ENCODE measurements at regions of chr7 and their contacts with region 1.

Region 1: DNA sequence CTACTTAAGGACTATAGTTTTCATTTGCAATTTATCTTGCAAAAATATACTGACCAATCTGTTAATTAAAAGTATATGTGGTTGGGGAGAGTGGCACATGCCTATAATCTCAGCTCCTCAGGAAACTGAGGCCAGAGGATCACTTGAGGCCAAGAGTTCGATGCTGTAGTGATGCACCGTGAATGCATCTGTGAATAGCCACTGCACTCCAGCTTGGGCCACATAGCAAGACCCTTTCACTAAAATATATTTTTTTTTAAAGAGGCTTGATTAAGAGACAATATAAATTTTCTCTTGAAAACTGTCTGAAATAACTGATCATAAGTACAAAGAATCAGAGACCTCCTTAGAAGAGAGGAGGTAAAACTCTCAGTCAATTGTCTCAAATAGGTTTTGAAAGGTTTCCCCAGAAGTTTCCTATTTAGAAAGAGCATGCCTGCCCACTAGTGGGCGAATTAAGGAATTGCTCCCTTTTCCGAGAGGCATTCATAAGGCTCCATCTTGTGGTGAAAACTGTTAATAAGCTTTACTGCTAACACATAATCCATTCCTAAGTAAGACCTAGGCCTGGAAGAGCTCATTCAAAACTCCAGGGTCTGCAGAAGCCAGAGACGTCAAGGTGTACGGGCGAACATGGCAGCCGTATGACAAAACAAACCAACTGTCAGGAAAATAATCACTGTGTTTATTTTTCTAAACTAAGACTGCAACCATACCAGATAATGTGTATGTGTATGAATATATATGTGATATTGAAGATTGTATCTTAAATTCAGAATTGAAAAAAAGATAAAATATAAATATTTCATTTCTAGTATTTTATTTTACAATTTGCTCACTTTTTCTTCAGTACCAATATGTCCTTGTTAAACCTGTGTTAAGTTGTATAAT is 6.8 kb upstream of the TAS2R40 start:
- DNase-seq: peak; percentile 80
- ATAC-seq: peak; percentile 91
- H3K4me3 ChIP-seq: no peak overlapping the region
- H3K27ac ChIP-seq: no peak overlapping the region
- H3K4me1 ChIP-seq: no peaks in the 10 kb centered on the region
- H3K27me3 ChIP-seq: 0 out of 5 replicates have a peak, but pooled peaks cover 0 to 3% of the 10 kb centered on the region in 2 experiments
- CTCF ChIP-seq: peak; percentile 95
- EP300 ChIP-seq: no peak
- POLR2A ChIP-seq: no peak
- RAD21 ChIP-seq: peak; percentile 92

Region 2: GRCh38 chr7:142853739-142854371 is 361.2 kb before region 1 on chr7:
- CTCF ChIA-PET with region 1: interaction called, 12 read pairs
- POLR2A ChIA-PET with region 1: no interaction called
- in situ Hi-C with region 1: no loop called
- intact Hi-C with region 1: loop called (anchors 2 kb)
- DNase-seq: peak; percentile 33
- ATAC-seq: peak; percentile 87
- H3K4me3 ChIP-seq: peak overlapping the region; percentile 44 to 77 (median 70)
- H3K27ac ChIP-seq: no peak overlapping the region
- H3K4me1 ChIP-seq: no peaks in the 10 kb centered on the region
- H3K27me3 ChIP-seq: peaks cover 1 to 29% of the 10 kb centered on the region in 2 experiments; a peak in 3 of 5 replicates
- CTCF ChIP-seq: peak; percentile 77
- EP300 ChIP-seq: no peak
- POLR2A ChIP-seq: no peak
- RAD21 ChIP-seq: peak; percentile 45; the same call in 1 of the 2 replicates

Region 3: DNA sequence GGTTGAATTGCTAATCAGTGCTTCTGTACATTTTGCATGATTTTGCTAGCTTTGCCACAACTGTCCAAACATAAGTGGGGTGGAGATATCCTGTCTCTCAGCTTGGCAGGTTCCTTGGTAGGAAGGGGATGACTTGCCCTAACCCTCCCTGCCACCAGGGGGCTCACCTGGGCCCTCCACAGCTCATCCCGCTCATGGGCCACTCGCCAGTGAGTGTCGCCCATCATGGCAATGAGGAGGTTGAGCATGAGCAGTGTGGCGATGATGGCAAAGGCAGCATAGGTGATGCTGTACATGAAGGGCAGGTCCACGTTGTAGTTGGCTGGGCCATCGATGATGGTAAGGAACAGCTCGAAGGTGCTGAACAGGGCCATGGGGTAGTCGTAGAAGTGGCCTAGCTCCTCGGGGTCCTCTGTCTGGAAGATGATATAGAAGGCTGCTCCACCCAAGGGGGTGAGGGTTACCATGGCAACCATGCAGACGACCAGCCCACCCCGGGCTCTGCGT is 341.7 kb before region 1 on chr7:
- CTCF ChIA-PET with region 1: interaction called, 3 read pairs
- POLR2A ChIA-PET with region 1: no interaction called
- in situ Hi-C with region 1: loop called (anchors 10 kb)
- intact Hi-C with region 1: no loop called
- DNase-seq: no peak
- ATAC-seq: peak; percentile 64
- H3K4me3 ChIP-seq: no peak overlapping the region
- H3K27ac ChIP-seq: no peak overlapping the region
- H3K4me1 ChIP-seq: no peaks in the 10 kb centered on the region
- H3K27me3 ChIP-seq: peaks cover 0 to 7% of the 10 kb centered on the region in 2 experiments; a peak in 2 of 5 replicates
- CTCF ChIP-seq: peak; percentile 68
- EP300 ChIP-seq: no peak
- POLR2A ChIP-seq: no peak
- RAD21 ChIP-seq: no peak

Region 4: DNA sequence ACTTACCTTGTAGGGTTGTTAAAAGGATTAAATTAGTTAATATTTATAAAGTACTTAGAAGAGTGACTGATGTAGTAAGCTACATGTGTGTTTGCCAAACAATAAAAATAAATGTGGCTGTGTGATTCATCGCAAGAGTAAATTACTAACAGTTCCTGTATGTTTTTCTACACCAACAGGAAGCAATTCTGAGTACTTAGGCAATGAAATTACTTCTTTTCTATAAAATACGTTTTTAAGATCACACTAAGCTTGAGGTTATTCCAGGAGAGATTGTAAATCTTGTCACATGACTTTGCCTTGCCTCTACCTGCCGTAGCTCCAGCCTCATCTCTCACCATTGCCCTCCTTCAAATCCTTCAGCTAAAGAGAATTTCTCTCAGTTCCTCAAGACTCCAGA is 30.1 kb after region 1 on chr7:
- CTCF ChIA-PET with region 1: no interaction called
- POLR2A ChIA-PET with region 1: no interaction called
- in situ Hi-C with region 1: no loop called
- intact Hi-C with region 1: no loop called
- DNase-seq: no peak
- ATAC-seq: no peak
- H3K4me3 ChIP-seq: no peak overlapping the region
- H3K27ac ChIP-seq: no peak overlapping the region
- H3K4me1 ChIP-seq: peaks cover 39% of the 10 kb centered on the region
- H3K27me3 ChIP-seq: no peaks in the 10 kb centered on the region
- CTCF ChIP-seq: no peak
- EP300 ChIP-seq: no peak
- POLR2A ChIP-seq: no peak
- RAD21 ChIP-seq: no peak

Region 5: DNA sequence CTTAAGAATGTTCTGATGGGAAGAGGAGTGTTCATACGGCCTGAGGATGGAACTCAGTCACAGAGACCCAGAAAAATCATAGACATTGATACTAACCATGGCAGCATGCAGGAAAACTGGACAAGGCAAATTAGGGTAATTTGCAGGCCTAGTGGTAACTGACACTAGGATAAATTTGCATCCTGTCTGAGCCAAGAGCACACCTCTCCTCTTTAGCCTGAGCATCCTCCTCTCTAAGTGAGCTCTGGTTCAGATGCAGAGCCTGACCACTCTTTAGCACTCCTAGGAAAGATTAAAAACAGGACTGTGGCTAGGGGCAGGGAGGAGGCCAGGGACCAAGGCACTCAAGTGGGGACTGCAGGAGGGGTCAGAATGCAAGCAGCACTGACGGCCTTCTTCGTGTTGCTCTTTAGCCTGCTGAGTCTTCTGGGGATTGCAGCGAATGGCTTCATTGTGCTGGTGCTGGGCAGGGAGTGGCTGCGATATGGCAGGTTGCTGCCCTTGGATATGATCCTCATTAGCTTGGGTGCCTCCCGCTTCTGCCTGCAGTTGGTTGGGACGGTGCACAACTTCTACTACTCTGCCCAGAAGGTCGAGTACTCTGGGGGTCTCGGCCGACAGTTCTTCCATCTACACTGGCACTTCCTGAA is 262.6 kb after region 1 on chr7 and contains the start of gene TAS2R41:
- CTCF ChIA-PET with region 1: no interaction called
- POLR2A ChIA-PET with region 1: no interaction called
- in situ Hi-C with region 1: no loop called
- intact Hi-C with region 1: no loop called
- DNase-seq: no peak
- ATAC-seq: no peak
- H3K4me3 ChIP-seq: no peak within 1 kb of the TSS
- H3K27ac ChIP-seq: no peak within 1 kb of the TSS
- H3K4me1 ChIP-seq: no peaks in the 10 kb centered on the region
- H3K27me3 ChIP-seq: no peaks in the 10 kb centered on the region
- CTCF ChIP-seq: no peak
- EP300 ChIP-seq: no peak
- POLR2A ChIP-seq: no peak
- RAD21 ChIP-seq: no peak
- total RNA-seq, gene TAS2R41: not detected in 2 replicates

Measured in HepG2 (cell line).